Heart left ventricle (tissue), 16 donors: ENCODE measurements at regions of chr11 and their contacts with region 1.

Region 1: DNA sequence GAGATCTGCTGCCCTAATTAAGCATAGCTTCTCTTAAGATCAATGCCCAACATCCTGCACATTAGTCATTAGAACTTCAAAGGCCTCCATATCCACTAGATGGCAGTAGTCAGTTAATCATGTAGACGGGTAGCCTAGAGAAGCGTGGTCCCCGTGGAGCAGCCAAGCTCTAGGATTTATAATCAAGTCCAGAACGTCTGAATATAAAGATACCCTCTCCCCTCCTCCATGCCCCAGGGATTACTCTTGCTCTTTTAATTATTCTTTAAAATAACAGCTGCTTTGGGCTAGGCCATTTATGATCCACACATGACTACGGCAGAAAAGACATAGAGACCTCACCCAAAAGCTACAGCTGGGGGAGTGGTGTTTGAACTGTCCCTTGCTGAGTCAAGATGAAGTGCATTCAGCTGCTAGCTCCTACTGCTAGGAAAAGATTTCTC is 327.6 kb upstream of the PLET1 start:
- DNase-seq: peak; percentile 57 to 76 (median 66)
- ATAC-seq: peak; percentile 58 to 88 (median 82)
- H3K4me3 ChIP-seq: no peak overlapping the region
- H3K27ac ChIP-seq: peak overlapping the region in 1 of 12 donors; percentile 44
- H3K4me1 ChIP-seq: peaks cover 0 to 6% (median 1%) of the 10 kb centered on the region in 12 donors
- H3K27me3 ChIP-seq: no peaks in the 10 kb centered on the region
- CTCF ChIP-seq: peak; percentile 64 to 86 (median 74)
- POLR2A ChIP-seq: no peak

Region 2: GRCh38 chr11:112655371-112655770 is 67.1 kb after region 1 on chr11:
- intact Hi-C with region 1: loop called in 1 of 10 experiments (anchors 5 kb)
- DNase-seq: peak; percentile 81 to 91 (median 87)
- ATAC-seq: peak; percentile 50 to 84 (median 78)
- H3K4me3 ChIP-seq: no peak overlapping the region
- H3K27ac ChIP-seq: peak overlapping the region in 8 of 12 donors; percentile 4 to 65 (median 40)
- H3K4me1 ChIP-seq: peaks cover 0 to 51% (median 21%) of the 10 kb centered on the region in 12 donors
- H3K27me3 ChIP-seq: no peaks in the 10 kb centered on the region
- CTCF ChIP-seq: peak in 4 of 12 donors; percentile 24 to 42 (median 28)
- POLR2A ChIP-seq: no peak

Region 3: DNA sequence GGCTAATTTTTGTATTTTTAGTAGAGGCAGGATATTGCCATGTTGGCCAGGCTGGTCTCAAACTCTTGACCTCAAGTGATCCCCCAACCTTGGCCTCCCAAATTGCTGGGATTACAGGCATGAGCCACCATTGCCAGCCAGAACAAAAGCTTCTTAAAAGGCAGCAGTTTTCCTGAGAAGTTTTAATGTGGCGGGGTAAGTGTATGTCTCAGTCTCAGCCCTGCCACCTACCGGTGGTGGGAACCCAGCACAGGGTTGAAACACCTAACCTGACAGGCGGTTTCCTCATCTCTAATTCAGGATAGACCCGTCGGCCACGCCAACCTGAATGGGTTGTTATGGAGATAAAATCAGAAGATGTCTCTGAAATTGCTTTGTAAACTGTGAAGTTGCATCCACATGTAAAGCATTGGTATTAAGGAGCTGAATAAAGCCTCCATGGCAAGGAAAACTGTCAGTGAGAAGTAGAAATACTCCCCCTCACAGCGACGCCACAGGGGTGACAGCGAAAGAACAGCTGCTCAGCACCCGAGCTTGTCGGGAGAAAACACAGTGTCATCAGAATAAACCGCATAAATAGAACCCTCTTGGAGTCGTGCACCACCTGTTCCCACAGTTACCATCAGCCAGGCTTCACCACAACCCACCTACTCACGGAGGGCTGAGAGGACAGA is 207.0 kb after region 1 on chr11:
- intact Hi-C with region 1: loop called in 4 of 10 experiments (anchors 5 to 10 kb)
- DNase-seq: no peak
- ATAC-seq: peak in 2 of 4 donors; percentile 47 to 50
- H3K4me3 ChIP-seq: no peak overlapping the region
- H3K27ac ChIP-seq: peak overlapping the region in 4 of 12 donors; percentile 19 to 42 (median 29)
- H3K4me1 ChIP-seq: peaks cover 0 to 39% (median 14%) of the 10 kb centered on the region in 12 donors
- H3K27me3 ChIP-seq: no peaks in the 10 kb centered on the region
- CTCF ChIP-seq: peak; percentile 21 to 63 (median 47)
- POLR2A ChIP-seq: no peak

Region 4: DNA sequence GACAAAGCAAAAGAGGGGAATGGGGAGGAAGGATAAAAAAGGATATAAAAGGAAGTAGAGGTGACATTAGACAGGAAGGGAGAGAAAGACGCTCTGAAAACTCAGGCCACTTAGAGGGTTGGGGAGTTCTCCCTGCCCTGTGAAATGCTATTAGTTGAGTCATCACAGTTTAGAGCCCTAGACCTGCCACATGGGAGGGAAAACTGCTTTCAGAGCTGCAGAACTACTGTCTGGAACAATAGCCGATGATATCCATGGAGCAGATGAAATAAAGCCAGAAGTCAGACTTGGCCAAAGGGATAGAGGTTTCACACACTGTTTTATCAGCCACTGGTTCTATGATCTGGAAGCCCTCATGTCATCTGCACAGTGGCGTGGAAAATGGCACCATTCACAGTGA is 530.8 kb after region 1 on chr11:
- intact Hi-C with region 1: loop called in 7 of 10 experiments (anchors 5 to 10 kb)
- DNase-seq: peak in 1 of 5 donors; percentile 18
- ATAC-seq: peak; percentile 62 to 87 (median 68)
- H3K4me3 ChIP-seq: no peak overlapping the region
- H3K27ac ChIP-seq: peak overlapping the region in 8 of 12 donors; percentile 24 to 63 (median 36)
- H3K4me1 ChIP-seq: peaks cover 0 to 54% (median 20%) of the 10 kb centered on the region in 12 donors
- H3K27me3 ChIP-seq: no peaks in the 10 kb centered on the region
- CTCF ChIP-seq: no peak
- POLR2A ChIP-seq: no peak